CD14-positive monocyte (primary cell): ENCODE measurements at regions of chr15 and their contacts with region 1.

Region 1: DNA sequence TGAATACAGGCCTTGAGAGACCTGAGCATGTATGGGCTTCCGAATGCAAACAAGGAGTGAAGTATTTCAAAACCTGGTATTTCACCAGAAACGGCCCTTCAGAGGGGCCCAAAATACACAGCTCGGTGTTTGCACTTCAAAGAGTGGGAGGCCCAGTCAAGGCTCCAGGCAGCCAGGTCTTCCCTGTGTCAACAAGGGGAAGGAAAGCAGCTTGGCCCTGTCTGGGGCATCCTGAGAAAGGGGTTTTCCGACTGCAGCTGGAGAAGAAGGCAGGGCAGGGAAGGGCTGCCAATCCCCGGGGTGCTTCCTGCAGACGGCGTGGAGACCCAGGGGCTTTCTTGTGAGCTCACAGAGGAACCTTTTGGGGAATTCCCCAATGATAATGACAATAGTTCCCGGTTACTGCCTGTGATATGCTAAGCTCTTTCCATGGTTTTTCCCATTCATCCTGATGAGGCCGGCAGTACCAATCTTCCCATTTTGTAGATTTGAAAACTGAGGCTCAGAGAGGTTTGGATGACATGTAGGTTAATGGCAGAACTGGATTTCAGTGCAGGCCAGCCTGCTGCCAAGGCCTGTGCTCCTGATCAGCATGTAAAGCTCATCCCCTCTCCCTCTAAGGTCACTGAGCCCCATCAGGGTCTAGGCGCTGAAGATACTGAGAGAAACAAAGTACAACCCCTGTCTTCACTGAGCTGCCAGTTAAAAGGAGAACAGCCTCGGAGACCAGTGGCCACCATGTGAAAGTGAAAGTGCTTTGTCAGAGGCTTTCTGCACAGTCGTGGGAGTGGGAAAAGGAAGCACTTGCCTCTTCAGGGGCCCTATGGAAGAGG is 43.0 kb upstream of the TLE3 start:
- DNase-seq: peak; percentile 87 to 98 (median 88)
- H3K4me3 ChIP-seq: peak overlapping the region in 1 of 3 experiments; percentile 36
- H3K4me3 Mint-ChIP-seq: peak overlapping the region; percentile 63 to 82
- H3K27ac ChIP-seq: peak overlapping the region; percentile 75 to 89
- H3K27ac Mint-ChIP-seq: peak overlapping the region; percentile 94 to 98 (median 97)
- H3K4me1 ChIP-seq: peaks cover 36 to 39% of the 10 kb centered on the region in 2 donors
- H3K4me1 Mint-ChIP-seq: peaks cover 49% of the 10 kb centered on the region
- H3K27me3 ChIP-seq: no peaks in the 10 kb centered on the region
- H3K27me3 Mint-ChIP-seq: peaks cover 16 to 28% (median 17%) of the 10 kb centered on the region in 3 donors
- CTCF ChIP-seq: no peak

Region 2: GRCh38 chr15:70182857-70183695 is 42.3 kb after region 1 on chr15:
- intact Hi-C with region 1: loop called in 1 of 2 experiments (anchors 5 kb)
- DNase-seq: peak; percentile 46 to 76 (median 56)
- H3K4me3 ChIP-seq: no peak overlapping the region
- H3K4me3 Mint-ChIP-seq: no peak overlapping the region
- H3K27ac ChIP-seq: no peak overlapping the region
- H3K27ac Mint-ChIP-seq: peak overlapping the region in 1 of 7 donors; percentile 64
- H3K4me1 ChIP-seq: peaks cover 4 to 11% of the 10 kb centered on the region in 2 donors
- H3K4me1 Mint-ChIP-seq: peaks cover 7% of the 10 kb centered on the region
- H3K27me3 ChIP-seq: no peaks in the 10 kb centered on the region
- H3K27me3 Mint-ChIP-seq: peaks cover 3 to 11% (median 8%) of the 10 kb centered on the region in 3 donors
- CTCF ChIP-seq: no peak

Region 3: GRCh38 chr15:70264014-70264582 is 123.3 kb after region 1 on chr15:
- intact Hi-C with region 1: loop called in 1 of 2 experiments (anchors 5 kb)
- DNase-seq: peak; percentile 86 to 94 (median 92)
- H3K4me3 ChIP-seq: peak overlapping the region in 1 of 3 experiments; percentile 44
- H3K4me3 Mint-ChIP-seq: peak overlapping the region; percentile 31 to 77
- H3K27ac ChIP-seq: peak overlapping the region; percentile 79 to 85
- H3K27ac Mint-ChIP-seq: peak overlapping the region; percentile 86 to 100 (median 100)
- H3K4me1 ChIP-seq: peaks cover 86 to 95% of the 10 kb centered on the region in 2 donors
- H3K4me1 Mint-ChIP-seq: peaks cover 89% of the 10 kb centered on the region
- H3K27me3 ChIP-seq: peaks cover 0 to under 1% of the 10 kb centered on the region in 2 donors
- H3K27me3 Mint-ChIP-seq: peaks cover 9 to 17% (median 9%) of the 10 kb centered on the region in 3 donors
- CTCF ChIP-seq: no peak

Region 4: DNA sequence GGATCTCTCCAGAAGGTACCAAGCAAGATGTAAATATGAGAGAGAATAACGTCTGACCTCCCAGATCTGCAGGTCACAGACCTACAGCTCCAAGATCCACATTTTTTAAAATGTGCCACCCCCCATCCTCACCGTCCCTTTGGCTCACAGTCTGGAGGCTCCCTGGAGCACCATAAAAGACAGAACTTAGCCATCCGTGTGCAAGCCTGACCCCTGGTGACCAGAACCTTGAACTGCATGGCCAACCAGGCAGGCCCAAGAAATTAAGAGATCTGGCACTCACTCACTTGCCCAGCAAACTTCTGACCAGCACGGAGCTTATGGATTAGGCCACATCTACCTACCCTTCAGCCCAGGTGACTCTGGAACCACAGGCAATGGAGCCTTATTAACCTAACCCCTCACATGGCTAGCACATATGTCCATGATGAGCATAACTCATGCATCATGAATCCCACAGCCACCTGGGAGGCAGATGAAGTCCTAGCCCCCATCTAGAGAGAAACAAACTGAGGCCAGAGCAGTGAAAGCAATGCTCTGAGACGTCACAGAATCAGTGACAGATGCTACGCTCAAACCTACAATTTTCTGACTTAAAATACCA is 347.3 kb after region 1 on chr15:
- intact Hi-C with region 1: loop called in 1 of 2 experiments (anchors 5 kb)
- DNase-seq: peak; percentile 80 to 84 (median 82)
- H3K4me3 ChIP-seq: no peak overlapping the region
- H3K4me3 Mint-ChIP-seq: peak overlapping the region in 1 of 2 donors; percentile 53
- H3K27ac ChIP-seq: peak overlapping the region; percentile 93 to 96
- H3K27ac Mint-ChIP-seq: peak overlapping the region; percentile 97 to 100 (median 99)
- H3K4me1 ChIP-seq: peaks cover 87 to 96% of the 10 kb centered on the region in 2 donors
- H3K4me1 Mint-ChIP-seq: peaks cover 92% of the 10 kb centered on the region
- H3K27me3 ChIP-seq: no peaks in the 10 kb centered on the region
- H3K27me3 Mint-ChIP-seq: peaks cover 9 to 21% (median 11%) of the 10 kb centered on the region in 3 donors
- CTCF ChIP-seq: peak; percentile 94

Region 5: DNA sequence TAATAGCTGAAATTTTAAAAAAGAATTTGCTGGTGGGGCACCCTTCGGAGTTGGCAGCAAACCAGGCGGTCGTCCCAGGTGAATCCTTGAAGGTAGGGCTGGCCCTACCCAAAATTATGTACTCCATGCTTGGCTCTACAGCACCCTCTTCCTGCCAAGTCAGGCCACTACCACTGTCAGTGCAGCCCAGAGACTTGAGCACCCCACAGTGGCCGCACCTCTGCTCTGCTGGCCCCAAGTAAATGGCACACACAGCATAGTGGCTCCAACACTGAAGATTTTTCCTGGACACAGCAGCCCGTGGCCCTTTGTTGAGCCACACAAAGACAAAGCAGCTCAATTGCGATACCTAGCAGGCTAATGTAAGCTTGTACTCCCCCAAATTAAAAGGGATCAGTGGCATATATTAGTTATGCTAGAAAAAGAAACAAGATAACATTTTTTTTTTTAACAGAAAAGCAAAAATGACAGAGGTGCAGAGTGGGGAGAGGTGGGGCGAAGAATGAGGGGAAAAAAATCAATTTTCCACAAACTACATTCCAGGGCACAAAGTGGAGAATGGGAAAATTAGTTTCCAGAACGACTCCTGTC is 372.1 kb after region 1 on chr15:
- intact Hi-C with region 1: loop called (anchors 2 to 5 kb)
- DNase-seq: peak; percentile 76 to 85 (median 82)
- H3K4me3 ChIP-seq: no peak overlapping the region
- H3K4me3 Mint-ChIP-seq: no peak overlapping the region
- H3K27ac ChIP-seq: no peak overlapping the region
- H3K27ac Mint-ChIP-seq: peak overlapping the region in 1 of 7 donors; percentile 78
- H3K4me1 ChIP-seq: peaks cover 23 to 28% of the 10 kb centered on the region in 2 donors
- H3K4me1 Mint-ChIP-seq: peaks cover 49% of the 10 kb centered on the region
- H3K27me3 ChIP-seq: no peaks in the 10 kb centered on the region
- H3K27me3 Mint-ChIP-seq: peaks cover 2 to 24% (median 10%) of the 10 kb centered on the region in 3 donors
- CTCF ChIP-seq: peak; percentile 100